ENCODE measurements at regions of chrX and their contacts with region 1.

Region 1: DNA sequence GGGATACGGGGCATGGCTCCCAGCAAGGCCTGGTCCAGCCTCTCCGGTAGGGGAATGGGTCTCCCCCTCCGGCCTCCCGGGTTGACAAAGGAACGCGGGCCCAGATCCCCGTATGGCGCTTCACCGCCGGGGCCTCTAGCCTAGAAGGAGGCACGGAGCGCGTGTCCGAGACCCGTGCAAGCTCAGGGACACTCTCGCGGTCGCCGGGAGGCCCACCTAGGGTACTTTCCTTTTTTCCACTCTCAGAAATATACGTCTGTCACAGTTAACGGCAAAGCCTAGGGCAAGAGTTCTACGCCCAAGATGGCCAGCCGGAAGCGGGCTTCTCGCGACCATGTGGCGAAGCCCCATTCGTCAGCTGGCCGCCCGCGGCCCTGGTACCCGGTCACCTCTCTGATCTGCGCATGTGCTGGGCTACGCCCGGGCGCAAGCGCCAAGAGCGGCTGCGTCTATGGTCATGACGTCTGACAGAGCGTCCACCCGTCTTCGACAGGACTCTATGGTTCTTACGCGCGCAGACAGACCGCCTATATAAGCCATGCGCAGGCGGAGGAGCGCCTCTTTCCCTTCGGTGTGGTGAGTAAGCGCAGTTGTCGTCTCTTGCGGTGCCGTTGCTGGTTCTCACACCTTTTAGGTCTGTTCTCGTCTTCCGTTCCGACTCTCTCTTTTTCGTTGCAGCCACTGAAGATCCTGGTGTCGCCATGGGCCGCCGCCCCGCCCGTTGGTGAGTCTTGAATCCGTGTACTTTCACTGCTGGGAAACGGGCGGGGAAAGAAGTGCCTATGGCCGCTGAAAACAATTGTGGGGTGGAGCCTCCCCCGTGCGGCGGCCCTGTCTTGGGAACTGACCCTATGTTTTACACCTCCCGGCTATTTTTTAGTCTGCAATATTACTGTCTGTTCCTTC is at the start of gene RPL10:
- DNase-seq: peak; percentile 88
- H3K4me3 ChIP-seq: peak within 1 kb of the TSS; percentile 79
- CTCF ChIP-seq: no peak

Region 2: DNA sequence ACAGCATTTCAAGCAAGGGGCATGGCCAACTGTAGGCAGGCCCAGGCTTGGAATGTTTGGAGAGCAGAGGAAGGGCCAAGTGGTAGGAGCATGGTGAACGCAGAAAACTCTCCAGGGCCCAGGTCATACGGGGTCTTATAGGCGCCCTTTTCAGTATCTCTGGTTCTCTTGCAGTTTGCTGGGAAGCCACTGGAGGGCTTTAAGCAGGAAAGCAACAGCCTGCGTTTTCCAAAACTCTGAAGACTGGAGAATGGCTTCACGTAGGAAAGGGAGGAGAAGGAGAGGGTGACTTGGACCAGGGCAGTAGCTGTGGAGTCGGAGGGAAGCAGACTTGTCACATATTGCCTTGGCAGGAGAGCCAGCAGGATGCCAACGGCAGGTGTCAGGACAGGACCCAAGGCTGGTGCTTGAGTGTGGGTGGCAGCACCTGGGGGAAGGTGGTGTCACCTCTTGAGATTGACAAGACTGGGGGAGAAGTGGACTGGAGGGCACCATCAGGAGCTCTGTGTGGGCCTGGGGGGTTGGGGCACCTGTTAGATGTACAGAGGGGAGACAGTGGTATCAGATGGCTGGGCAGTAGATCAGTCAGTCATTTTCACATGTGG is 80.6 kb before region 1 on chrX:
- CTCF ChIA-PET with region 1: no interaction called
- POLR2A ChIA-PET with region 1: no interaction called
- DNase-seq: no peak
- H3K4me3 ChIP-seq: no peak overlapping the region
- CTCF ChIP-seq: peak; percentile 46

Region 3: GRCh38 chrX:154409222-154409871 is 11.3 kb after region 1 on chrX and contains the start of gene DNASE1L1:
- CTCF ChIA-PET with region 1: interaction called, 12 read pairs
- POLR2A ChIA-PET with region 1: interaction called, 15 read pairs
- DNase-seq: no peak
- H3K4me3 ChIP-seq: peak within 1 kb of the TSS; percentile 56
- CTCF ChIP-seq: no peak

Region 4: DNA sequence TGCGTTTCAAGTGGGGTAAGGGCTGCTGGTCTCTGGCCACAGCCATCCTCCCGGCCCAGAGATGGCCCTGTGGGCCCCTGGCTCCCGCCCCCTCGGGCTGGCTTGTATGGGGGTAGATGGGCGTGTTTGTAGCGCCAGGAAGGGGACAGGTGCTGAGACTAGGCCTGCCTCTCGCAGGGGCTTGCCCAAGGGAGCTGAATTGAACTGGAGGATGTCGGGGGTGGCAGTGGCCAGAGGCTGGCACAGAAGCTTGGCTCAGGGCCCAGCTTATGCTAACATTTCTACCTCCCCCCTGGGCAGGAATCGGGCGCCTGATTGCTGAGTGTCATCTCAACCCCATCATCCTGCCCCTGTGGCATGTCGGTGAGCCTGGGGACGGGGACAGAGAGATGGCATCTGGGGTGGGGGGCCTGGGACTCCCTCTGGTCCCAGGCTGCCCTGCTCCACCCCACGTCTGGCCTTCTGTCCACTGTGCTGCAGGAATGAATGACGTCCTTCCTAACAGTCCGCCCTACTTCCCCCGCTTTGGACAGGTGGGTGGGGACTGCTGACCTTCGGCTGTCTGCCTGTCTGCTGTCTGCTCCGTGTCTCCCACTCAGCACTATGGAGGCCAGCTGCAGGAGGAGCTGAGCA is 21.8 kb after region 1 on chrX:
- CTCF ChIA-PET with region 1: no interaction called
- POLR2A ChIA-PET with region 1: no interaction called
- DNase-seq: no peak
- H3K4me3 ChIP-seq: no peak overlapping the region
- CTCF ChIP-seq: no peak

Region 5: DNA sequence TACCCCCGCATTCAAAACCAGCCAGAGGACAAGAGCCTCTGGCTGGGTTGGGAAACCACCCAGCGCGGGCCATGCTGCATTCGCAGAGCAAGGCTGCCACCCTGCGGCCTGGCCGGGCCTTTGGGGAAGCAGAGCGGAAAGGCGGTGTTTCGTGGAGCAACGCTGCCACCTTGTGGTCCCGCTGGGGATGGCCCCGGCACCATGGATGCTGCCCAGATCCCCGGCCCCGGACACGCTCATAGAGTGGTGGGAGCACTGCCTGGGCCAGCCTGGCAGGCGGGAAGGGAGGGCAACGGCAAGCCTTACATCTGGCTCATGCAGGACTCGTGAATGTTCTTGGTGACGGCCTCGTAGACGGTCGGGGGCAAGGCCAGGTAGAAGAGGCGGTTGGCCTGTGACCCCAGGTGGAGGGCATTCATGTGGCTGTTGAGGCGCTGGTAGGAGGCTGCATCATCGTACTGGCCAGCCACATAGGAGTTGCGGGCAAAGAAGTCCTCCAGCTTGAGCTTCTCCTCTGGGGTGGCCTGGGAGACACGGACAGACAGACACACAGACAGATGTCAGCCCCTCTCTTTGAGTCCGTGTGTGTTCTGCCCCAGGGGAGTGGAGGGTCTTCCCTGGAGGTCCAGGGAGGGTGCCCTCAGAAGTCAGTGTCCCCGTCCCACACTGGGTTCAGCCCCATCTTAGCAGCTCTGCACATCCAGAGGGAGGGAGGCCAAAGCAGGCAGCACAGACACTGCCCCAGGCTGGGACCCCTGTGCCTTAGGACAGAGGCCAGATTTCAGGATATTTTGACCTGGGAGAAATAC is 137.0 kb after region 1 on chrX:
- CTCF ChIA-PET with region 1: interaction called, 12 read pairs
- POLR2A ChIA-PET with region 1: interaction called, 5 read pairs
- DNase-seq: no peak
- H3K4me3 ChIP-seq: no peak overlapping the region
- CTCF ChIP-seq: peak; percentile 94